Activated CD4-positive, alpha-beta T cell treated with anti-CD3 and anti-CD28 coated beads for 36 hours (primary cell): ENCODE measurements at regions of chr11 and their contacts with region 1.

Region 1: GRCh38 chr11:128553662-128554362 is 33.5 kb downstream of the ETS1 start:
- DNase-seq: no peak
- ATAC-seq: no peak
- H3K4me3 Mint-ChIP-seq: no peak overlapping the region
- H3K27ac Mint-ChIP-seq: peak overlapping the region; percentile 94
- H3K4me1 Mint-ChIP-seq: peaks cover 56% of the 10 kb centered on the region
- H3K27me3 Mint-ChIP-seq: no peaks in the 10 kb centered on the region

Region 2: DNA sequence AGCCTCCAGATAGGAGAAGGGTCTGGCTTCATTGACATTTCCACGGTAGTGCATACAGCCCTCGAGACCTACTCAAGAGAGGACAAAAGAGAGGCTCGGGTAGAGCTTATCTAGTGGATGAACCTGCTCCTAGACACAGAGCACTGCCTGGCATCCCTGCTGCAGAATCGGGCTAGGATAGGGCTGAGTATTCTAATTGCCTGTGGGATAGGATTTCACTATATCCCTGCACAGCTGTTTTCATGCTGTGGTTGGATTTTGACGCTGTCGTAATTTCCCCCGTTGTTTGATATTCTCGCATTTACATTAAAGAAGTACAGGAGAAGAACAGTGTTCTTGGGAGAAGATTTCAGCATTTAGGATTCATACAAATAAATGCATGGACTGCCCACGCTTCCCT is 1661.1 kb before region 1 on chr11:
- CTCF ChIA-PET with region 1: no interaction called
- POLR2A ChIA-PET with region 1: no interaction called
- intact Hi-C with region 1: no loop called
- DNase-seq: no peak
- ATAC-seq: no peak
- H3K4me3 Mint-ChIP-seq: no peak overlapping the region
- H3K27ac Mint-ChIP-seq: no peak overlapping the region
- H3K4me1 Mint-ChIP-seq: peaks cover 5% of the 10 kb centered on the region
- H3K27me3 Mint-ChIP-seq: peaks cover 6% of the 10 kb centered on the region

Region 3: DNA sequence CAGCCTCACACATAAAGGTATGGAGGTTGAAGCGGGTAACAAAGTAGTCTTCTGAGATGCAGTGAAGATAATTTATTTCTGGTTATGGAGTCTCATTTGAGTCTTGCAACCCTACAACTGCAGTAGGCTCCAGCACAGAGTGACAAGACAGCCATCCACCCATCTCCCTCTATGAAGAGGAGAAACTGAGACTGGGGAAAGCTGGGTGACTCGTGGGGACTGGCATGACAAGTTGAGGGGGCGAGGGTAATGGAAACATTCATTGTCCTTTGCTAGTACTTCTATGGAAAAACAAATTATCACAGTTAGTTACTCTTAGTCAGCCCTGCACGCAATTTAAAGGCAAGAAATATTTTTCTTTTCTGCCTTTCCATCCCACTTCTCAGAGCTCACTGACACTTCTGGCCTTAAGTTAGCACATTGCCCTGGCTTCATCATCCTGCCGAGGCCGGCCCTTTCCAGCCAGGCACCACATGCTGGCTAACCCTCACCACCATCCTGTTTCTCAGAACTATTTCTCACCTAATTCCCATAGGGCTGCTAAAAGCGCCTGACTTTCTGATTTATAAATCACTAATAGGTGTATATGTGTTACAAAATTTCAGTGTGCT is 327.6 kb before region 1 on chr11:
- CTCF ChIA-PET with region 1: no interaction called
- POLR2A ChIA-PET with region 1: no interaction called
- intact Hi-C with region 1: loop called in 1 of 2 experiments (anchors 1 kb)
- DNase-seq: peak; percentile 62
- ATAC-seq: peak; percentile 54
- H3K4me3 Mint-ChIP-seq: no peak overlapping the region
- H3K27ac Mint-ChIP-seq: peak overlapping the region; percentile 55
- H3K4me1 Mint-ChIP-seq: peaks cover 52% of the 10 kb centered on the region
- H3K27me3 Mint-ChIP-seq: no peaks in the 10 kb centered on the region

Region 4: DNA sequence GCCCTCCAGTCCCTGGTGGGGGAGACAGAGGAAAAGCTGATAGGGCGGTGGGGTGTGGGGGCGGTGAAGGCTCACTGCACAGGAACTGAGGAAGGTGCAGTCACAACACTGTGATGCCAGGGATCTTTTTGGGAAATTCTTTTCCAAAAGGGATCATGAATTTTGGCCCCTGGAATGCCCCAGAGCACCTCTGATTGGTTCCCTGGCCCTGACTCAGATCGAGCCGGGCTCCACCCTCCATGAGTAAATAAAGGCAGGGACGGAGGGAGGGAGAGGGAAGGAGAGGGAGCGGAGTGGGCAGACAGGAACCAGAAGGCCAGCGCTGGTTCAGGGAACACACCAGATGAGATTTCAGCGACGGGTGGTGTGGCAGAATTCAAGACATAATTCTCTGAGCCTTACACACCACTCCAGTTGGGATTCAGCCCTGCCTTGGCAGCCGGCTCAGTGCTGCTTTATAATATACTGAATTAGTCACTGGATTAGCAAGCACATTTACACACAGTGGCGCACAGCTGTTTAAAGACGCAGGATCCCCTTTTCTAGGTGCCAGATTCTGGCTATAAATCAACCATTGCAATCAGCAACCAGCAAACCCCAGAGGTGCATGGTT is 46.7 kb before region 1 on chr11:
- CTCF ChIA-PET with region 1: interaction called, 4 read pairs
- POLR2A ChIA-PET with region 1: interaction called, 3 read pairs
- intact Hi-C with region 1: loop called in 1 of 2 experiments (anchors 1 kb)
- DNase-seq: peak; percentile 80
- ATAC-seq: peak; percentile 58
- H3K4me3 Mint-ChIP-seq: peak overlapping the region; percentile 96
- H3K27ac Mint-ChIP-seq: peak overlapping the region; percentile 98
- H3K4me1 Mint-ChIP-seq: peaks cover 89% of the 10 kb centered on the region
- H3K27me3 Mint-ChIP-seq: no peaks in the 10 kb centered on the region

Region 5: DNA sequence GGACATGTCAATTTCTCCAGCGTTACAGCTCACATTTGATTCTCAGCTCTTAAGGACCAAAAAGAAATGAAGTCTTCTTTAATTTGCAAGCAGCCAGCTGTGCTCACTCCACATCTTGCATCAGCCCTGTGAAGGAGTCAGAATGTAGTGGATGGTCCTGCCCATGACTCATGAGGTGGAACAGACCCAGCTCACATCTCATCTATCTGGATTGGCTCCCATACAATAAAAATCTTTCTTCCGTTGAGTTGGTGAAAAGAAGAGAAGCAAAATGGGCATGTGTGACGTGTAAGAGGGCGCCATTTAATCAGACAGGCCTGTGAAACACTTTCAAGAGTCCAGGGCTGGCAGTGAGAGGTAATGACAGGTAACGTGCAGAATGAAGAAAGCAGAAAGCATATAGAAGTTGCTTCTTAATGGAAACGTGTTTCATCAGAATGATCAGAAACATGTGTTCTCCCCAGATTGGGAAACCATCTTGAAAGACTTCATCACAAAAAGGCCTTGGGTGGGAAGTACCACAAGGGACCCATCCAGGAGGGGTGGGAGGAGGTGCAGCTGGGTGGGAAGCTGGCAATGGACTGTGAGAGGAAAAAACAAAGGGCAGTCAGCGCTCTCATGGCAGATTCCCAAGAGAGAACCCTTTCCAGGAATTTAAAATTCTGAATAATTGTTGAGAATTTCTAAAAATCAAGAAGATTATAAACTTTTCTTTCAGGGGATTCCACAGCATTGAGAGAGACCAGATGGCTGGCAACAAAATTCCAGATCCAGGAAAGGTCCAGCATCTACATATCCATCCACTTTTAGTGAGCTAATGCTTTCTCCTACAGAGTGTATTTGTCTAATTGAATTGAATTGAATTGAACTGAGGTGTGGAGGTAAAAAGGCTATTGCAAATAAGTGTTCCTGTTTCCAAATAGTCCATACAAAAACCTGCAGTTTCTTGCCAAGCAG is 23.4 kb before region 1 on chr11:
- CTCF ChIA-PET with region 1: interaction called, 8 read pairs
- POLR2A ChIA-PET with region 1: interaction called, 7 read pairs
- intact Hi-C with region 1: loop called (anchors 1 kb)
- DNase-seq: peak; percentile 36
- ATAC-seq: no peak
- H3K4me3 Mint-ChIP-seq: no peak overlapping the region
- H3K27ac Mint-ChIP-seq: peak overlapping the region; percentile 4
- H3K4me1 Mint-ChIP-seq: peaks cover 68% of the 10 kb centered on the region
- H3K27me3 Mint-ChIP-seq: no peaks in the 10 kb centered on the region

Region 6: DNA sequence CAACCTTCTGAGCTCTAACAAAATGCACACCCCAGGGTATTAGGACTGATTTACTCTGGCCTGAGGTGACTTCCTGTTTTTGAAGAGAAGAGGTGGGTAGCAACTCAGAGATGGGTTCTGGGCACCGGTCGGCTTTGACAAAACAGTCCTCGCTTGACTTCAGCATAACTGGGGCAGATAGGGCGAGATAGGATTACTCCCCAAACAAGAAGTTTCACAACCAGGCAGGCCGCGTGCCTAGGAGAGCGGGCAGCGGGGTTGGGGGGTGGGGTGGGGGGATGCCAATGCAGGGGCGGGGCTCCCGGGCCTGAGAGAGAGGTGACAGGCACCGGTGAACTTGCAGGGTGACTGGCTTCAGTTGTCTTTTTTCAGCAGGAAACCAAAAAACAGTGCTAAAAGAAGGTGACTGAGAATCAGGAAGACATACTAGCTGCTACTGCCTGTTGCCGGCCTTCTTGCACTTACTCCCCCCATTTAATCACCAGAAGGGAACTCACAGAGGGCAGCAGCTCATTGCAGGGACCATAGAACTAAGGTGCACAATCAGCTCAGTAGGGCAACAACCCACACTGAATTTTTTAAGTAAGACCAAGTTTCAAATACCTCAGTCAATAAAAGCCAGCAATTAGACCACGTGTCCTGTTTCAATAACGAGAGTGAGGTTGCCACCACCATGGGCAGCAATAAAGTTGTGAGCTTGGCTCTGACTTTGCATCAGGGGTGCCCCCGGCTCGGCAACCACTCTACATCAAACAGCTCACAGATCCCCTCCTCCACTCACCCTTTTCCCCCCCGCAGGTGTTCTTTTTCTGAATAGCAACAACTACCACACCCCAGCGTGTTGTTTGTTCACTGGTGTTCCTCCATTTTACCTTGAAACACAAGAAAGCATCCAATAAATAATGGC is 70.7 kb after region 1 on chr11:
- CTCF ChIA-PET with region 1: interaction called, 7 read pairs
- POLR2A ChIA-PET with region 1: interaction called, 5 read pairs
- intact Hi-C with region 1: loop called in 1 of 2 experiments (anchors 2 kb)
- DNase-seq: peak; percentile 70
- ATAC-seq: peak; percentile 35
- H3K4me3 Mint-ChIP-seq: peak overlapping the region; percentile 58
- H3K27ac Mint-ChIP-seq: peak overlapping the region; percentile 90
- H3K4me1 Mint-ChIP-seq: peaks cover 95% of the 10 kb centered on the region
- H3K27me3 Mint-ChIP-seq: no peaks in the 10 kb centered on the region